K562 (cell line): ENCODE measurements at regions of chr2 and their contacts with region 1.

Region 1: DNA sequence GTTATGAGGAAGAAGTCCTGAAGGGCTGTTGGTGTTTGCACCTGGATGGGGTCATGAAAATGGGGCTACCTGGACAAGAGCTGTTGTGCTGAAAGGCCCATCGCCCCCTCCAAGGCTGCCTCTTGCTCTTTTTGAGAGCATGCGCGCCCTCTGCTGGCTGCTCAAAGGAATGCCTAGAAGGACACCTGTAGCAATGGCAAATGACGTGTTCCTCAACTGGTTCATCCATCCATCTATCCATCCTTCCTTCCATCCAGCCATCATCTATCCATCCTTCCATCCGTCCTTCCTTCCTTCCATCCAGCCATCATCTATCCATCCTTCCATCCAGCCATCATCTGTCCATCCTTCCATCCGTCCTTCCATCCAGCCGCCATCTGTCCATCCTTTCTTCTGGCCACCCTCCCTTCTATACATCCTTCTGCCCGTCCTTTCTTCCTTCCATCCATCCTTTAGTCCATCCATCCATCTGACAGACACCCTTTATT is 17.2 kb upstream of the RPL31 start:
- DNase-seq: peak; percentile 73 to 82 (median 74)
- ATAC-seq: peak; percentile 96
- H3K4me3 ChIP-seq: no peak overlapping the region
- H3K27ac ChIP-seq: no peak overlapping the region
- H3K4me1 ChIP-seq: 0 out of 5 replicates have a peak, but pooled peaks cover 0 to 4% of the 10 kb centered on the region in 2 experiments
- H3K27me3 ChIP-seq: peaks cover 16 to 54% of the 10 kb centered on the region in 2 experiments
- CTCF ChIP-seq: peak; percentile 83 to 88 (median 86)
- EP300 ChIP-seq: no peak
- POLR2A ChIP-seq: no peak
- RAD21 ChIP-seq: peak; percentile 90 to 96

Region 2: DNA sequence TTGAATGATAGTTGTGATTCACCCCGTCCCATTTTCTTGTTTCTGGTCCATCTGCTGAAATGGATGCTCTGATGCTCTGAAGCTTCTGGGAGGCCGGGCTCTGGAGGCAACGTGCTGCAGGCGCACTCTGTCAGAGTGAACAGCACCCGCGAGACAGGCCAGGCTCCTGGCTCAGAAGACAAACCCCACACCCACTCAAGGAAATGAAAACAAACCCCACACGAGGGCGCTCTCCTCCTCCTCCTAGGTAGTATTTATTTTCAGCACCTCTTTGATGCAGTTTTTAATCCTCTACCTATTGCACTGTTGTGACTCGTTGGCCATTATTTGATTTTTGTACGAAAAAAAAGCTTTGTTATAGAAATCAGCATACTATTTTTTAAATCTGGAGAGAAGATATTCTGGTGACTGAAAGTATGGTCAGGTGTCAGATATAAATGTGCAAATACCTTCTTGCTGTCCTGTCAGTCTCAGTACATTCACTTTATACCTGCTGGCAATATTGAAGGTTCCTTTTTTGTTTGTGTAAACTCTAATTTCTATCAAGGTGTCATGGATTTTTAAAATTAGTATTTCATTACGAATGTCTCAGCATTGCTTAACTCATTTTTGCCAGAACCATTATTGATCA is 557.2 kb before region 1 on chr2:
- CTCF ChIA-PET with region 1: interaction called, 10 read pairs
- POLR2A ChIA-PET with region 1: no interaction called
- in situ Hi-C with region 1: no loop called
- intact Hi-C with region 1: loop called (anchors 10 kb)
- DNase-seq: peak; percentile 39 to 71 (median 46)
- ATAC-seq: peak; percentile 90
- H3K4me3 ChIP-seq: no peak overlapping the region
- H3K27ac ChIP-seq: no peak overlapping the region
- H3K4me1 ChIP-seq: peaks cover 0 to 5% of the 10 kb centered on the region in 2 experiments; a peak in 2 of 5 replicates
- H3K27me3 ChIP-seq: peaks cover 0 to 2% of the 10 kb centered on the region in 2 experiments; a peak in 2 of 5 replicates
- CTCF ChIP-seq: peak; percentile 48 to 59 (median 58); a peak in 5 of 6 replicates
- EP300 ChIP-seq: no peak
- POLR2A ChIP-seq: no peak
- RAD21 ChIP-seq: peak in 1 of 2 experiments; percentile 40; a peak in 2 of 4 replicates

Region 3: GRCh38 chr2:100610381-100610831 is 374.5 kb before region 1 on chr2:
- CTCF ChIA-PET with region 1: interaction called, 8 read pairs
- POLR2A ChIA-PET with region 1: no interaction called
- in situ Hi-C with region 1: loop called (anchors 10 kb)
- intact Hi-C with region 1: loop called (anchors 1 kb)
- DNase-seq: peak; percentile 58 to 69 (median 66)
- ATAC-seq: peak; percentile 93
- H3K4me3 ChIP-seq: no peak overlapping the region
- H3K27ac ChIP-seq: no peak overlapping the region
- H3K4me1 ChIP-seq: no peaks in the 10 kb centered on the region
- H3K27me3 ChIP-seq: peaks cover 18 to 64% of the 10 kb centered on the region in 2 experiments
- CTCF ChIP-seq: peak; percentile 61 to 77 (median 69); a peak in 5 of 6 replicates
- EP300 ChIP-seq: no peak
- POLR2A ChIP-seq: no peak
- RAD21 ChIP-seq: peak; percentile 71 to 86

Region 4: DNA sequence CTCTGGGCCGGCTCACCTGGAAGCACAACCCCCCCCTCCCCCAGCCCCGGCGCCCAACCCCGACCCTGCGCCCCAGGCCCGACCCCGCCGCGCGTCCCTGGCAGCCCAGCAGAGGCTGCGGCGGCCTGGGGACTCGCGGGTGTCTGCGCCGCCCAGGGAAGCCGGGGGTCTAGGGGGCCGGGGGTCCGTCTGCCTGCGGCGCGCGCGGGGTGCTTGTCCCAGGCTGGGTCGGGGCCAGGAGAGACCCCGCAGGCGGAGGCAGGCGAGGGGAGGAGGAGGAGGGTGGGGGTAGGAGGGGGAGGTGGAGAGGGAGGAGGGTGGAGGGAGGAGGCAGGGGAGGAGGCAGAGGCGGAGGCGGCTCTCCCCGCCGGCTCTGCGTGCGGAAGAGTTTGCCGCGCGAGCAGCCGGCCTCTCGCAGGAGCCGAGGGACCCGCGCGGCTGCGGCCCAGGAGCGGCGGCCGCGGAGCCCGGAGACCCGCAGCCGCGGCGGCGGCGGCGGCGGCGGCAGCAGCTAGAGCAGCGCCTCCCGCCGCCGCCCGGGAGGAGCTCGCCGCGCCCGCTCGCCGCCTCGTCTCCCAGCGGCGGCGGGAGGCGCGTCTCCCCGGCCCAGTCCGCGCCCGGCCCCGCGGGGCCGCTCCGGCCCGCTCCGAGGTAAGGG is 165.0 kb before region 1 on chr2 and contains the start of gene NPAS2:
- CTCF ChIA-PET with region 1: no interaction called
- POLR2A ChIA-PET with region 1: no interaction called
- in situ Hi-C with region 1: no loop called
- intact Hi-C with region 1: loop called (anchors 10 kb)
- DNase-seq: peak in 3 of 4 experiments; percentile 17 to 21 (median 18)
- ATAC-seq: no peak; the same call in 1 of the 3 replicates
- H3K4me3 ChIP-seq: no peak within 1 kb of the TSS
- H3K27ac ChIP-seq: no peak within 1 kb of the TSS
- H3K4me1 ChIP-seq: peaks cover 0 to 8% of the 10 kb centered on the region in 2 experiments; a peak in 2 of 5 replicates
- H3K27me3 ChIP-seq: peaks cover 18 to 25% of the 10 kb centered on the region in 2 experiments; a peak in 4 of 5 replicates
- CTCF ChIP-seq: no peak
- EP300 ChIP-seq: no peak
- POLR2A ChIP-seq: no peak
- RAD21 ChIP-seq: no peak
- polyA plus RNA-seq, gene NPAS2: 0.06 TPM in 1 of 2 experiments, not detected in the other

Region 5: DNA sequence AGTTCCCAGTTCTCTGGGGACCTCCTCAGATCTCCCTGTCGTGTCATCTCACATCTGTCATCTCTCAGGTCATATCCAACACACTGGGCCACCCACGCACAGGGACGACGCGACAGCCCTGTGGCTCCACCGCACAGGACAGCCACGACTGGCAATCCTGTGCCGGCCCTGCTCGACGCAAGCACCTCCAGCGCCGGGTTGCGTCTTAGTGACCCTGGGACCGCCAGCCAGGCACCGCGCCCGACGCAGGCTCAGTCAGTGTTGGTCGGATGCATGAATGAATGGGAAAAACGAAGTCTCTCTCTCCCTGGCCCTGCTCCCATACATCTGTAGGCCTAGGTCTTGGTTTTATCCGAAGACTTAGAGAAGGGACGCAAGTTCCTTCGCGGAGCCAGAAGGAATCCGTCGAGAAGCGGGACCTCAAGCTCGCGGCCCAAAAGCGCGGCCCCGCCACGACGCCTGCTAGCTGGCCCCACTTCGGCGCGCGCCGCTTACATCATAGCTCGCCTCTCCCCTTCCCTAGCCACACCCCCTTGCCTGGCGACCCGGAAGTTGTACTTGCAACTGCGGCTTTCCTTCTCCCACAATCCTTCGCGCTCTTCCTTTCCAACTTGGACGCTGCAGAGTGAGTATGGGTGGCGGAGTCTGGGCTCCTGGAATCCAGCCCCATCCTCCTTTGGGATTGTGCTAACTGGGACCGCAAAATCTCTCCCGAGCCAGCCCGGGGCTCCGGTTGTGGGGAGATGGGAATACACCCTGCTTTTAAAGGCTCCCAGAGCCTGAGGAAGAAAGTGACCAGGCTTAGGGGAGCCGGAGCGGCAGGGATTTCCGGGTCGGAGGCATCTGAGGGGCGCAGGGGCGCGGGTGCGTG is 17.0 kb after region 1 on chr2 and contains the start of gene RPL31:
- CTCF ChIA-PET with region 1: no interaction called
- POLR2A ChIA-PET with region 1: interaction called, 13 read pairs
- in situ Hi-C with region 1: no loop called
- intact Hi-C with region 1: no loop called
- DNase-seq: peak; percentile 94 to 98 (median 96)
- ATAC-seq: peak; percentile 94
- H3K4me3 ChIP-seq: peak within 1 kb of the TSS; percentile 86
- H3K27ac ChIP-seq: peak within 1 kb of the TSS; percentile 85
- H3K4me1 ChIP-seq: peaks cover 18% of the 10 kb centered on the region in 2 experiments; a peak in 4 of 5 replicates
- H3K27me3 ChIP-seq: peaks cover 3 to 7% of the 10 kb centered on the region in 2 experiments; a peak in 2 of 5 replicates
- CTCF ChIP-seq: no peak
- EP300 ChIP-seq: no peak
- POLR2A ChIP-seq: peak; percentile 99
- RAD21 ChIP-seq: no peak
- polyA plus RNA-seq, gene RPL31: 3,112 to 6,037 TPM